Calu3 (cell line): ENCODE measurements at regions of chr4 and their contacts with region 1.

Region 1: GRCh38 chr4:129641179-129641578 is 545.2 kb downstream of the C4orf33 start:
- DNase-seq: peak; percentile 57
- H3K4me3 Mint-ChIP-seq: no peak overlapping the region
- H3K27ac Mint-ChIP-seq: no peak overlapping the region
- H3K4me1 Mint-ChIP-seq: no peaks in the 10 kb centered on the region
- H3K27me3 Mint-ChIP-seq: no peaks in the 10 kb centered on the region
- CTCF ChIP-seq: peak; percentile 62

Region 2: GRCh38 chr4:129218360-129218759 is 422.8 kb before region 1 on chr4:
- CTCF ChIA-PET with region 1: no interaction called
- intact Hi-C with region 1: loop called (anchors 2 kb)
- DNase-seq: peak; percentile 24
- H3K4me3 Mint-ChIP-seq: no peak overlapping the region
- H3K27ac Mint-ChIP-seq: no peak overlapping the region
- H3K4me1 Mint-ChIP-seq: no peaks in the 10 kb centered on the region
- H3K27me3 Mint-ChIP-seq: no peaks in the 10 kb centered on the region
- CTCF ChIP-seq: no peak

Region 3: GRCh38 chr4:129344058-129344457 is 297.1 kb before region 1 on chr4:
- CTCF ChIA-PET with region 1: no interaction called
- intact Hi-C with region 1: loop called (anchors 2 kb)
- DNase-seq: peak; percentile 29
- H3K4me3 Mint-ChIP-seq: peak overlapping the region; percentile 31
- H3K27ac Mint-ChIP-seq: no peak overlapping the region
- H3K4me1 Mint-ChIP-seq: peaks cover 8% of the 10 kb centered on the region
- H3K27me3 Mint-ChIP-seq: no peaks in the 10 kb centered on the region
- CTCF ChIP-seq: no peak

Region 4: GRCh38 chr4:129455482-129455881 is 185.7 kb before region 1 on chr4:
- CTCF ChIA-PET with region 1: no interaction called
- intact Hi-C with region 1: no loop called
- DNase-seq: no peak
- H3K4me3 Mint-ChIP-seq: no peak overlapping the region
- H3K27ac Mint-ChIP-seq: no peak overlapping the region
- H3K4me1 Mint-ChIP-seq: no peaks in the 10 kb centered on the region
- H3K27me3 Mint-ChIP-seq: no peaks in the 10 kb centered on the region
- CTCF ChIP-seq: no peak

Region 5: DNA sequence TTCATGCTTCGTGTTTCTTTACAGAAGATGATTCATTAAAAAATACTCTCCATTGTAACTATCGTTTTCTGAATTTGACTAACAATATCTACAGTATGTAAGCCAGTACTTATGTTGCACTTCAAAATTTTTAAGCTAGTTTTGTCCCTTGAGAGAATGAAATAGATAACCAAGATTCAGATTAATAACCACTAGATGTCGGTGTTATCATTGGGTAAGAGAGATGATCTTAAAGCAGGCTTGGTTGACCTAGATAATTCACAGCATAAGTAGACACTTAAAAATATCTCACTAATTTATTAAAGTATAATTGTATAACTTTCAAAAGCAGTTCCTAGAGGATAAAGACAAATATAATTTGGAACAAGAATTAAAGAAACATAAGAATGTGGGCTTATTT is 114.4 kb before region 1 on chr4:
- CTCF ChIA-PET with region 1: interaction called, 3 read pairs
- intact Hi-C with region 1: loop called (anchors 1 kb)
- DNase-seq: no peak
- H3K4me3 Mint-ChIP-seq: no peak overlapping the region
- H3K27ac Mint-ChIP-seq: no peak overlapping the region
- H3K4me1 Mint-ChIP-seq: no peaks in the 10 kb centered on the region
- H3K27me3 Mint-ChIP-seq: no peaks in the 10 kb centered on the region
- CTCF ChIP-seq: no peak